ENCODE measurements at regions of chr1 and their contacts with region 1.

Region 1: DNA sequence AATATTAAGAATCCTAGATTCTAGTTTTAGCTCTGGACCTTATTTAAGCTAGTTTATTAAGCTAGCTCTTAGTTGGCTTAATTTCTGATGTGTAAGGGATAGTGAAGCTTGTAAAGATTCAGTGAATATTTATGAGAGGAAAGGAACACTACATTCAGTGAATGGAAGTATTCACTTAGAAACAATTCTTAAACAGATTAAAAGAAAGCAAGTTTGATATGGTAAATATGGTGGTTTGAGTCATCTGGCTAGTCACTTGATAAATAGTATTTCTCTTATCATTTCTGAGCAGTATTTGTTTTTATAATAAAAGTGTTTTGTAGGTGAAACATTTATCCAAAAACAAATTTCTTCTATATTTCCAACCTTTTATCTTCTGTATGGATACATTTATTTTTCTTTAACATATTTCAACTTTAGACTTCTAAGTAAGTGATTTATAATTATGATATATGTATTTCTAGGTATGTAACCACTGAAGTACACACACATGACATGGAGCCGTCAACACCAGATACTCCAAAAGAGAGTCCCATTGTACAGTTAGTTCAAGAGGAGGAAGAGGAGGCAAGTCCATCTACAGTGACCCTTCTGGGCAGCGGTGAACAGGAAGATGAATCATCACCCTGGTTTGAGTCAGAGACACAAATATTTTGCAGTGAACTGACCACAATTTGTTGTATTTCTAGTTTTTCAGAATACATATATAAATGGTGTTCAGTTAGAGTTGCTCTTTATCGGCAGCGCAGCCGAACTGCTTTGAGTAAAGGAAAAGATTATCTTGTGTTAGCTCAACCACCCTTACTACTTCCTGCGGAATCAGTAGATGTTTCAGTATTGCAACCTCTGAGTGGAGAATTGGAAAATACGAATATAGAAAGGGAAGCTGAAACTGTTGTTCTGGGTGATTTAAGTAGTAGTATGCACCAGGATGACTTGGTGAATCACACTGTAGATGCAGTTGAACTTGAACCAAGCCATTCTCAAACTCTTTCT is 55.6 kb downstream of the SUCO start:
- DNase-seq: no peak
- H3K4me3 Mint-ChIP-seq: no peak overlapping the region
- H3K27ac Mint-ChIP-seq: peak overlapping the region; percentile 85
- H3K4me1 Mint-ChIP-seq: peaks cover 12% of the 10 kb centered on the region
- H3K27me3 Mint-ChIP-seq: no peaks in the 10 kb centered on the region

Region 2: DNA sequence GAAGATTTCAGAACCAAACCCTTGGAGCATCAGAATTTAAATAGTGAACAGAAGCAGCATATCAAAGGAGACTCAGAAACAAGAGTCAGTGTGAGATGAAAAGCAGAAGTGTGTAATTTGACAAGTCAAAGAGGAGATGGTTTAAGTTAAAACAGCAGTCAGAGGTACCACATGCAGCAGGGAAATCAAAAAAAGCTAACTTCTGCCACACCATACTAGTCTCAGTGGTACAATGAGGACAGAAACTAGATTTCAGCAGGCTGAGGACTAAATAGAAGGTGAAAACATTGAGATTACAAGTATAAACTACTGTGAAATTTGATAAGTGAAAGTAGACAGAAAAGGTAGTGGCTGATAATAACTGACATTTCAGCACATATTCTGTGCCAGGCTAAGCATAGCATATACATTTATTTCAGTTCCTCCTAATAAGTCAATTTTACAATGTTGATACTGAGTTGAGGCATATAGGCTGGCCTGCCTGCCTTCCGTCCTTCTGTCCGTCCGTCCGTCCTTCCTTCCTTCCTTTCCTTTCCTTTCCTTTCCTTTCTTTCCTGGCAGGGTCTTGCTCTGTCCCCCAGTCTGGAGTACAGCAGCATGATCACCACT is 43.1 kb before region 1 on chr1:
- intact Hi-C with region 1: loop called (anchors 5 kb)
- DNase-seq: no peak
- H3K4me3 Mint-ChIP-seq: no peak overlapping the region
- H3K27ac Mint-ChIP-seq: no peak overlapping the region
- H3K4me1 Mint-ChIP-seq: peaks cover 18% of the 10 kb centered on the region
- H3K27me3 Mint-ChIP-seq: no peaks in the 10 kb centered on the region

Region 3: DNA sequence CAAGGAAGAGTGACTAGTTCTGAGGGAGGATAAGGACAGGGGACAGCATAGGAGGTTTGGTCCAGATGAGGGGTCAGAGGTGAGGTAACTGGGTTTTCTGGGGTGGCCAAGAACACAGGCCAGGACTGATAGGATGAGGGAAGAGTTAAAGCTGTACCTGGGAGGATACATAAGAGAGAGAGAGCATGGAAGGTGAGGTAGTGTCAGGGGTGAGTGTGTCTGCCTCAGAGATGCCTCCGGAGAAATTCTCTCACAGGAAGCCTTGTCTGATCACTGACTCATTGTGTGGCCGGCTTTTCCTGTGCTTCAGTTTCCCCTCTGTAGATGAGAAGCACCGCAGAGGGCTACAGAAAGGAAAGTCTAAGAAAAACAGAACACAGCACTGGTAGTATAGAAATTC is 110.5 kb after region 1 on chr1:
- intact Hi-C with region 1: loop called (anchors 1 kb)
- DNase-seq: peak; percentile 92
- H3K4me3 Mint-ChIP-seq: peak overlapping the region; percentile 82
- H3K27ac Mint-ChIP-seq: peak overlapping the region; percentile 90
- H3K4me1 Mint-ChIP-seq: peaks cover 49% of the 10 kb centered on the region
- H3K27me3 Mint-ChIP-seq: no peaks in the 10 kb centered on the region

Measured in activated CD4-positive, alpha-beta T cell treated with anti-CD3 and anti-CD28 coated beads, Interleukin-2, amount 10 ng/mL, durations not matched to agents 24 days and 14 days (primary cell).